Activated CD8-positive, alpha-beta T cell treated with anti-CD3 and anti-CD28 coated beads, Interleukin-2, amount 10 ng/mL, durations not matched to agents 7 days and 5 days (primary cell): ENCODE measurements at regions of chr2 and their contacts with region 1.

Region 1: GRCh38 chr2:73290049-73290839 is 3.1 kb downstream of the EGR4 start:
- DNase-seq: peak; percentile 76
- ATAC-seq: no peak
- H3K4me3 Mint-ChIP-seq: no peak overlapping the region
- H3K27ac Mint-ChIP-seq: no peak overlapping the region
- H3K4me1 Mint-ChIP-seq: peaks cover 29% of the 10 kb centered on the region
- H3K27me3 Mint-ChIP-seq: peaks cover 54% of the 10 kb centered on the region

Region 2: DNA sequence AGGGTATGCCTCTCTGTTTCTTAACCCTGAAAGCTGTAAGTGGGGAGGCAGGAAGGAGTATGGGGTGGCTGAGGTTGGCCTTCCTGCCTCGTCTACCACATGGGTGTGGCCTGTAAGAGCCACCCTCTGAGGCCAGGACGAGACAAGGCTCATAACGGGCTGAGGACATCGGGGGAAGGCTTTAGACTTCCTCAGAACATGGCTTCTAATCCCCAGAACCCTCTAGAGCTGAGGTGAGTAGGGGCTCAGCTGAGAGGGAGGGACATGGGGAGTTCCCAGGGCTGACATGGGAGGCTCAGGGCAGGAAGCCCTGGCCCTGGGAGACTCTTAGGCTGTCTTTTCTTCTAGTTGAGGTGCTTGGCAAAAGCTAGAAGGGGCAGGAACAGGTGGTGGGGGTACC is 336.3 kb before region 1 on chr2:
- CTCF ChIA-PET with region 1: no interaction called
- POLR2A ChIA-PET with region 1: no interaction called
- DNase-seq: peak; percentile 84
- ATAC-seq: peak; percentile 96
- H3K4me3 Mint-ChIP-seq: peak overlapping the region; percentile 79
- H3K27ac Mint-ChIP-seq: peak overlapping the region; percentile 92
- H3K4me1 Mint-ChIP-seq: peaks cover 40% of the 10 kb centered on the region
- H3K27me3 Mint-ChIP-seq: no peaks in the 10 kb centered on the region

Region 3: GRCh38 chr2:73243884-73244570 is 46.2 kb before region 1 on chr2:
- CTCF ChIA-PET with region 1: interaction called, 26 read pairs
- POLR2A ChIA-PET with region 1: no interaction called
- DNase-seq: no peak
- ATAC-seq: no peak
- H3K4me3 Mint-ChIP-seq: no peak overlapping the region
- H3K27ac Mint-ChIP-seq: peak overlapping the region; percentile 46
- H3K4me1 Mint-ChIP-seq: peaks cover 15% of the 10 kb centered on the region
- H3K27me3 Mint-ChIP-seq: no peaks in the 10 kb centered on the region